Activated CD8-positive, alpha-beta T cell treated with anti-CD3 and anti-CD28 coated beads, Interleukin-2, amount 10 ng/mL, durations not matched to agents 7 days and 5 days (primary cell): ENCODE measurements at regions of chr7 and their contacts with region 1.

Region 1: GRCh38 chr7:150988230-150989226 is 2.3 kb upstream of the NOS3 start:
- DNase-seq: peak; percentile 75
- ATAC-seq: peak; percentile 73
- H3K4me3 Mint-ChIP-seq: no peak overlapping the region
- H3K27ac Mint-ChIP-seq: no peak overlapping the region
- H3K4me1 Mint-ChIP-seq: peaks cover 16% of the 10 kb centered on the region
- H3K27me3 Mint-ChIP-seq: peaks cover 25% of the 10 kb centered on the region

Region 2: DNA sequence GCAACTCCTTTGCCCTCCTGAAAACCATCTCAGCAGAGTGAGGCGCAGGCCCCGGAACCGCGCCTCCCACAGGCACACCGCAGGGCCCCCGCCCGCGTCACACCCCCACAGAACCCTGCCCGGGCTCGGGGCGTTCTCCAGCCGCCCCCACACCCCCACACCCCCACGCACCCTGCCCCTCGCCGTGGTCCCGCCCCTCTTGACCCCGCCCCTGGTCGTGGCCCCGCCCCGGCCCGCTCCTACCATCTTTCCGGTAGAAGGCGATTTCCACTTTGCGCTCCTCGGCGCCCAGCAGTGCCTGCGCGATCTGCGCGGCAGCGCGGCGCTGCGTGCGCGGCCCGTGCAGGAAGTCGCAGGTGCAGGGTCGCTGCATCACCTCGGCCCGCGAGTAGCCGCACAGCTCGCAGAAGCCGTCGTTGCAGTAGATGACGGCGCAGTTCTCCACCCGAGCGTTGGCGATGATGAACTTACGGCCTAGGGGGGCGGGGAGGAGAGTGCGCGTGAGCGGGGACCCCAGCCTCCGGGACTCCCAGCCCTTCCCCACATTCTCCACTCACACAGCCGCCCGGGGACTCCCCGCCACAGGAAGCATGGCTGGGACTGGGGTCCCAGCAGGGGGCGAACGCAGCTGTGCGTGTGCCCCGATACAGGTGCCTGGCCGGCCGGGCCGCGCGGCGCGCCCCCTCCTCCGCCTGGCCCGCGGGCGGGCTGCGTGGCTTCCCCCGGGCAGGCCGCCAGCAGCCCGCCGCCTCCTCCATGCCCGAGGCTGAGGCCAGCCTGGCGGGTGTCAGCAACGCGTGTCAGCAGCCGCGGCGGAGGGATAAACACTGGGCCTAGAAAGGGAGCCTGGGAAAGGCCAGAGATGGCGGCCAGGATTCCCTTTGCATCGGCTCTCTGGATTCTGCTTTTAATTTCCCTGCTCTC is 13.8 kb before region 1 on chr7:
- CTCF ChIA-PET with region 1: interaction called, 34 read pairs
- POLR2A ChIA-PET with region 1: no interaction called
- DNase-seq: peak; percentile 77
- ATAC-seq: peak; percentile 82
- H3K4me3 Mint-ChIP-seq: peak overlapping the region; percentile 79
- H3K27ac Mint-ChIP-seq: peak overlapping the region; percentile 67
- H3K4me1 Mint-ChIP-seq: peaks cover 28% of the 10 kb centered on the region
- H3K27me3 Mint-ChIP-seq: peaks cover 31% of the 10 kb centered on the region

Region 3: GRCh38 chr7:151008511-151009323 is 20.2 kb after region 1 on chr7:
- CTCF ChIA-PET with region 1: interaction called, 35 read pairs
- POLR2A ChIA-PET with region 1: interaction called, 3 read pairs
- DNase-seq: peak; percentile 83
- ATAC-seq: peak; percentile 62
- H3K4me3 Mint-ChIP-seq: peak overlapping the region; percentile 76
- H3K27ac Mint-ChIP-seq: peak overlapping the region; percentile 83
- H3K4me1 Mint-ChIP-seq: peaks cover 62% of the 10 kb centered on the region
- H3K27me3 Mint-ChIP-seq: no peaks in the 10 kb centered on the region

Region 4: DNA sequence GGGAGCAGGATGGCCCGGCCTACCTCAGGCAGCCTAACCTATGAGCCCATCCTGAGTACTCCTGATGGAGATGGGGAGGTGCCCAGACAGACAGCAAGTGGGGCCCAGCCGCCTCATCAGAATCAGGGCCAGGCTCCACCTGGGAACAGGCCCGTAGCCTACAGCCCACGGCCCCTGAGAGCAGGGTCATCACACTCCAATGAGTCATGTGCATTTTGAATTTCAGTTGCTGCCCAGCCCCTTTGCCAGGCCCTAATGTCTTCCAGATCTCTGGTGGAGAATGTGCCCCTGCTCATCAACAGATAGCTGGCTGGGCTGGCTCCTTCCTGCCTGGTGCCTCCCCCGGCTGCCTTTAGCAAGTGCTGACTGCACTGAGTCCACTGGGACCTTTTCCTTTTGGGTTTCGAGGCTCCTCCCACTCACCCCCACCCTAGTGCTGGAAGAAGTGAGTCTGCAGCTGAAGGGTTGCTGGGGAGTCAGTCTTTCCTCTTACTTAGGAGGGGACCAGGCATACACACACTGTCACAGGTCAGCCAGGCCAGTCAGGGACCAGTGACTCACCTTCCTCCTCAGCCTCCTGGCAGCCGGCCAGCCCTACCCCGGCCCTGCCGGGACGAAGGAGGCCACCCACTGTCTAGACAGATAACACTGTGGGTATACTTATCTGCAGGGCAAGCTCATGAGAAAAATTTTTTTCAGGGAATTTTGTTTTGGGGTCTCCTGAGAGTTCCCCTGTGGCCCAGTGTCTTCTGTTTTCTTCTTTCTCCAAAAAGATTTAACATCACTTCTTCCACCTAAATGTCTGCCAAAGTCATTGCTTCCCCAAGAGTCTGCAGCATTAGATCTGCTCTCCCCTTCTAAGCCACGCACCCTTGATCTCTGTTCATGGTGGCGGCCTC is 50.7 kb after region 1 on chr7:
- CTCF ChIA-PET with region 1: no interaction called
- POLR2A ChIA-PET with region 1: no interaction called
- DNase-seq: peak; percentile 53
- ATAC-seq: peak; percentile 67
- H3K4me3 Mint-ChIP-seq: no peak overlapping the region
- H3K27ac Mint-ChIP-seq: peak overlapping the region; percentile 39
- H3K4me1 Mint-ChIP-seq: peaks cover 17% of the 10 kb centered on the region
- H3K27me3 Mint-ChIP-seq: no peaks in the 10 kb centered on the region

Region 5: DNA sequence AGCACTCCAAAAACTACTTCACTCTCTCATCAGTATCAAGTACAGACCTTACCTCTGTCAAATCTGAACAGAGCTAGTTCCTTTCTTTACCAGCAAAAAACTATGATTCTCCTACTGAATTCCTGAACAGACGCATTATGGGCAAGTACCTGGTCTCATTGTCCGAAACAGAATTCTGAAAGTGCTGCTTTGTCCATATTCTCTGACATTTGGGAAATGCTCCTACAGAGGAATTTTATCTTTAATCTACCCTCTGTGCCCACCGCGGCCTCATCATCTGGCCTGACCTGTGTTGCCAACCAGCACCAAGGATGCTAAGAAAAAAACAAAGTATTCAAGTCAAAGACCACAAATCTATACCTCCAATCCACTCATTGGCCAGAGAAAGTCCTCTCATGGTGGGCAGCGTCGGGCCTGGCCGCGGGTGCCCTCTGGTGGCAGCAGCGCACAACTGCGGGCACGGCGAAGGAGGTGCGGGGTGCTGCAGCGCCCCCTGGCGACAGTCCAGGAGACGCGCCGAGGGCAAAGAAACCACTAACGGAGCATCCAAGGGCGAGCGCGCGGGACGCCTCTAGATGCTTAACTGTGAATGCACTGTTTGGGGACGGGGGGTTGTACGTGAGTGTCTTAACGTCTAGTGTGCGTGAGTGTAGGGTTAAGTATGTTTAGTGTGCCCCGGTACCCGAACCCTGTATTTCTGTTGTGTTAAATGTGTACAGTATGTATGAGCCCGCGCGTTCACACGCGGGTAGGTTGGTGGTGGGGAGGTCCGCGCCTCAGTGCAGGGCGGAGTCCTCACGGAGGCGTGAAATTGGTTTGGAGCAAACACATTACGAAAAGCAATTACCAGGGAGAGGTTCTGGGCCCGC is 184.0 kb after region 1 on chr7:
- CTCF ChIA-PET with region 1: no interaction called
- POLR2A ChIA-PET with region 1: no interaction called
- DNase-seq: peak; percentile 83
- ATAC-seq: peak; percentile 74
- H3K4me3 Mint-ChIP-seq: no peak overlapping the region
- H3K27ac Mint-ChIP-seq: no peak overlapping the region
- H3K4me1 Mint-ChIP-seq: peaks cover 13% of the 10 kb centered on the region
- H3K27me3 Mint-ChIP-seq: peaks cover 43% of the 10 kb centered on the region

Region 6: DNA sequence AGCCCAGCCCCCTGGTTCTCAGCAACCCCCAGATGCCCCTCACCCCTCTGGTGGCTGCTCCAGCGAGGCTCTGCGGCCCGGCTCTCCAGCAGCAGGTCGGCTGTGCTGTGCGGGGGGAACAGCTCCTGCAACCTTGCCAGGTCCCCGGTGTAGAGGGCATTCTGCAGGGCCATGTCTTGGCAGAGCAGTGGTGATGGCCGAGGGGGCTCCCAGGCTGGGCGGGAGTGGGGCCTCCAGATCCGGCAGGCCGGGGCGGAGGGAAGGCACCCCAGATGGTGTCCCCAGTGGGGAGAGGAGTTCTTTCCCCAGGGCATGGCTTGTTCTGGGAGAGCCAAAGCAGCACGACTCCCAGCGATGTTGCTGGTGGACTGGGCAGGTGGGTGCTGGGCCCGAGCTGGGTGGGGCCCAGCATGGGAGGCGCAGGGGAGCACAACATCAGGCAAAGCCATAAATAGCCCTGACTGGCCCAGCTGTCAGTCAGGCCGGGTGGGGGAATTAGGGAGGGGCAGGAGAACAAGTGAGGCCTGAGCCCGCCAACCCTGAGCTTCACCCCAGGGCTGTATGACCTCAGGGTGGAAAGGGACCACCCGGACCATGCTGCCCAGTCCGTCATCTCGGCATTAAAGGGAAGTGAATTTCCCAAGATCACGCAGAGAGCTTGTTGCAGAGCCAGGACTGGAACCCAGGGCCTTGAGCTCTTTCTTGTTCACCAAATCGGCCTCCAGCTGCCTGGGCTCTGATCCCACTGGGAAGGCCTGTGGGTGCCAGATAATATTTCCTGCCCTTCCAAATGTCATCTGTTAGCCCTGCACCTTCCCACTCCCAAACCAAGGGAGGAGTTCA is 199.1 kb after region 1 on chr7:
- CTCF ChIA-PET with region 1: no interaction called
- POLR2A ChIA-PET with region 1: no interaction called
- DNase-seq: no peak
- ATAC-seq: no peak
- H3K4me3 Mint-ChIP-seq: no peak overlapping the region
- H3K27ac Mint-ChIP-seq: no peak overlapping the region
- H3K4me1 Mint-ChIP-seq: no peaks in the 10 kb centered on the region
- H3K27me3 Mint-ChIP-seq: peaks cover 10% of the 10 kb centered on the region